Posterior vena cava (tissue), 2 donors: ENCODE measurements at regions of chr10 and their contacts with region 1.

Region 1: GRCh38 chr10:34356463-34356862 is 458.6 kb downstream of the PARD3 start:
- DNase-seq: no peak

Region 2: GRCh38 chr10:33579996-33580395 is 776.5 kb before region 1 on chr10:
- intact Hi-C with region 1: loop called in 1 of 2 experiments (anchors 5 kb)
- DNase-seq: no peak

Region 3: GRCh38 chr10:35019041-35020024 is 662.9 kb after region 1 on chr10:
- intact Hi-C with region 1: no loop called
- DNase-seq: no peak